ENCODE measurements at regions of chr12 and their contacts with region 1.

Region 1: DNA sequence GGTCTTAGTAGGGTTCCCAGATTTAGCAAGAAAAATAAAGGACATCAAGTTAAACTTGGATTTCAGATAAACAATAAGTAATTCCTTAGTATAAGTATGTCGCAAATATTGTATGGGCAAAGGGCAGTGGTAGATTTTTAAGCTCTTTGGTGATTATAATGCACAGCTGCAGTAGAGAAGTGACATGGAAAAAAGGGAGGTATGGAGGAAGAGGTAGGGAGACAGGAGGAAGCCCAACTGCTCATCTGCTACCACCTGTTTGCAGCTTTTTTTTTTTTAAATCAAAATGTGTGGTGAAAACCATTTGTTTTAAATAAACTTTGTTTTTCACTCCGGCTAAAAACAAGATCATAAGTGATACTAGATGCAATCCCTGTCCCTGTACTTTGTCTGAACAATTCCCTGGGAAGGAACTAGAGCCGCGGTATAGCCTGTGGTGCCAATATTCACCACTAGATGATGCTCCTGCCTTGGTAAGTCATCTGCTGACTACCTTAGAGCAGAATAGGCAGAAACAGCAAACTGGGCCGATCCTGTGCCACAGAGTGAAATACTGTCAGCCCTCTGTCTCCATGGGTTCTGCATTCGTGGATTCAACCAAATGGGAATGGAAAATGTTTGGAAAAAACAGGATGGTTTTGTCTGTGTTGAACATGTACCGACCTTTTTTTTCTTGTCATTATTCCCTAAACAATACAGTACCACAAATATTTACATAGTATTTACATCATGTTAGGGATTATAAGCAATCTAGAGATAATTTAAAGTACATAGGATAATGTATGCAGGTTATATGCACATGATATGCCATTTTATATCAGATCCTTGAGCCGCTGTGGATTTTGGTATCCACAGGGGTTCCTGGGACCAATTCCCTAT is 62.4 kb upstream of the PLBD1 start:
- DNase-seq: peak; percentile 69
- H3K4me3 Mint-ChIP-seq: no peak overlapping the region
- H3K27ac Mint-ChIP-seq: no peak overlapping the region
- H3K4me1 Mint-ChIP-seq: no peaks in the 10 kb centered on the region
- H3K27me3 Mint-ChIP-seq: peaks cover 10% of the 10 kb centered on the region

Region 2: DNA sequence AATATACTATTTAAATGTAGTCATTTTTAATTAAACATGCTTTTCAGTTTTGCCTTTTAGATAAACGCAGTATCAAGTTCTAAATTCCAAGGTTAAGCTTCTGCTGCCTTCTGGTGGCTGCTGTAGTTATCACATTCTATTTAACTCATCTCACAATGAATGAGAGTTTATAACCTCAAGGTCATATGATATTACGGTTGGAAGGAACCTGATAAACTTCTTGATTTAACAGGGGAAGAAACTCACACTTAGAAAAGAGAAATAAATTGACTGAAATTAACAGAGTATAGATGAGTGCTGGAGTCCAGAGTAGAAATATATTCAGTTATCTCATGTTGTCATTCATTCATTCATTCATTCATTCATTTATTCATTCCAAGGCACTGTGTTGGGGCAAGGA is 34.4 kb after region 1 on chr12:
- CTCF ChIA-PET with region 1: interaction called, 19 read pairs
- POLR2A ChIA-PET with region 1: no interaction called
- DNase-seq: peak; percentile 25
- H3K4me3 Mint-ChIP-seq: no peak overlapping the region
- H3K27ac Mint-ChIP-seq: no peak overlapping the region
- H3K4me1 Mint-ChIP-seq: peaks cover 10% of the 10 kb centered on the region
- H3K27me3 Mint-ChIP-seq: peaks cover 5% of the 10 kb centered on the region

Region 3: DNA sequence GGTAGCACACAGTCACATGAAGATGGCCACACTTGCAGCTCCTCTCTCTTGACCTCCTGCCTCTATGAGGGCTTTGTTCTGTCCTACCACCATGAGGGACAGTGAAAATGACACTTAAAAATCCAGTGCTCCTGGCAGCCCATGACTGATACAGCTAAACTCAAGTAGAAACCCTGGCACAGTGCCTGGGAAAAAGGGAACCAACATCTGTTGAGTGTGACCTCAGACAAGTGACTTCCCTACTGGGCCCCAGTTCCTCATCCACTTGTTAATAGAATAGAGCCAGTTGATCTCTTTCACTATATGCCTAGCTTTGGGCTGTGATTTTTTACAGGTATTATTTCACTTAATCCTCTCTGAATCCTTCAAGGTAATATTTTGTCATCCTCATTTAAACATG is 61.5 kb after region 1 on chr12:
- CTCF ChIA-PET with region 1: no interaction called
- POLR2A ChIA-PET with region 1: no interaction called
- DNase-seq: no peak
- H3K4me3 Mint-ChIP-seq: no peak overlapping the region
- H3K27ac Mint-ChIP-seq: no peak overlapping the region
- H3K4me1 Mint-ChIP-seq: no peaks in the 10 kb centered on the region
- H3K27me3 Mint-ChIP-seq: no peaks in the 10 kb centered on the region